ENCODE measurements at regions of chr6 and their contacts with region 1.

Region 1: GRCh38 chr6:116847227-116847626 is 18.3 kb upstream of the GPRC6A start:
- DNase-seq: no peak
- H3K4me3 Mint-ChIP-seq: no peak overlapping the region
- H3K27ac Mint-ChIP-seq: no peak overlapping the region
- H3K4me1 Mint-ChIP-seq: no peaks in the 10 kb centered on the region
- H3K27me3 Mint-ChIP-seq: no peaks in the 10 kb centered on the region
- CTCF ChIP-seq: no peak

Region 2: DNA sequence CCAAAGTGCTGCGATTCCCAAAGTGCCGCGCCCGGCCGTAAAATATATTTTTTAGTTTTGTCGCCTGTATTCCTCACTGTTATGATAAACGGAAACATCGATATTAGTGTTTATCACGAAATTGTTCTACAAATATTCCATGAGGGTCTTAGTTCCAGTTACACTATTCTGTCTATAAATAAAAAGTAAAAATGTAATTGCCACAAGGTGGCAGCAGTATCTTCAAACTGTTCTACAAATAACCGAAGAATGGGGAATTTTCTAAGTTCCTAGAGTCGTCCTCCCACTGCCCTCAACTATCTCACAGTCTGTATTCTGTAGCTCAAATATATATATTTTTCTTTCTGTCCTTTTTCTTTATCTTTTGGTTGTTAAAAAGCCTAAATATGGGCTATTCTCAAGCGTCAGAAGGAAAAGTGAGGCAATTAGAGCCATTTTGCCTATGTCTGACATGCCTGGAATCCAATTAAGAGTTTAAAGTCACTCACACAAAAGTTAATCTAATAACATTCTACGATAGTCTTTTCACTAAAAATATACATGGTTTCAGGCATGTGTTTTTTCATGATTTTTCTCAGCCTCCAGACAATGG is 67.6 kb before region 1 on chr6:
- CTCF ChIA-PET with region 1: no interaction called
- intact Hi-C with region 1: loop called (anchors 1 kb)
- DNase-seq: peak; percentile 2
- H3K4me3 Mint-ChIP-seq: no peak overlapping the region
- H3K27ac Mint-ChIP-seq: no peak overlapping the region
- H3K4me1 Mint-ChIP-seq: no peaks in the 10 kb centered on the region
- H3K27me3 Mint-ChIP-seq: no peaks in the 10 kb centered on the region
- CTCF ChIP-seq: no peak